Ovary (tissue), 10 donors: ENCODE measurements at regions of chr6 and their contacts with region 1.

Region 1: DNA sequence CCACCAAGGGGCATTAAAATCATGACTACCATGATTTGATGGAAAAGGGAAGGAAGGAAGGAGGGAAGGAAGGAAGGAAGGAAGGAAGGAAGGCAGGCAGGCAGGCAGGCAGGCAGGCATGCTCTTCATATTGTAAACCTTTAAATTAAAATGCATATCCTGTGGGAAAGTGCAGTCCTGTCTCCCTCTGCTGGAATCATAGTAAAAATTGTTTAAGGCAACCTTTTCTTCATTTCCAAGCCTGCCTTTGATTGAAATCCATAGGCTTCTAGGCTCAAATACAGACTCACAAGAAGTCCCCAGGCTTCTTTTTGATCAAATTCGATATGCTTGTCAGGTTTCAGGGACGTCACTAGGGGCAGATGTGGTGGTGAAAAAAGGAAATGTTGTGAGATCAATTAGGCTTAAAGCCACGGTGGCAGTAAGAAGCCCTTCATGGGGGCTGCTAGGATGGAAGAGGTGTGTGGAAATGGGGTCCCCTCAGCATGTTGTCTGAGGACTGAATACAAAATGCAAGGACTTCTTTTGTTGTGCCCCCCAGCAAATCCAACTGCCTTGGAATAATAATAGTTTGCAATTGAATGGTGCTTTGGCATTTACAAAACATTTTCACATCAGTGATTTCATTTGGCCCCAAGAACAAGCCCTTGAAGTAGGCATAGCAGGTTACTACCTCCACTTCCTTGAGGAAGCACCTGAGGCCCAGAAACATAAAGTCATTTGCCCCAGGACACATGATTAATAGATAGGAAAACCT is 25.6 kb upstream of the GABRR1 start:
- DNase-seq: no peak
- H3K4me3 ChIP-seq: no peak overlapping the region
- H3K27ac ChIP-seq: no peak overlapping the region
- H3K4me1 ChIP-seq: no peaks in the 10 kb centered on the region
- H3K27me3 ChIP-seq: no peaks in the 10 kb centered on the region
- CTCF ChIP-seq: peak in 2 of 3 donors; percentile 29 to 48
- EP300 ChIP-seq: no peak
- POLR2A ChIP-seq: no peak

Region 2: GRCh38 chr6:89787660-89788328 is 545.0 kb after region 1 on chr6:
- intact Hi-C with region 1: loop called in 1 of 4 experiments (anchors 5 kb)
- DNase-seq: no peak
- H3K4me3 ChIP-seq: no peak overlapping the region
- H3K27ac ChIP-seq: no peak overlapping the region
- H3K4me1 ChIP-seq: no peaks in the 10 kb centered on the region
- H3K27me3 ChIP-seq: no peaks in the 10 kb centered on the region
- CTCF ChIP-seq: no peak
- EP300 ChIP-seq: no peak
- POLR2A ChIP-seq: no peak